Activated CD4-positive, alpha-beta T cell treated with anti-CD3 and anti-CD28 coated beads, Interleukin-2, amount 10 ng/mL, durations not matched to agents 24 days and 14 days (primary cell): ENCODE measurements at regions of chr3 and their contacts with region 1.

Region 1: DNA sequence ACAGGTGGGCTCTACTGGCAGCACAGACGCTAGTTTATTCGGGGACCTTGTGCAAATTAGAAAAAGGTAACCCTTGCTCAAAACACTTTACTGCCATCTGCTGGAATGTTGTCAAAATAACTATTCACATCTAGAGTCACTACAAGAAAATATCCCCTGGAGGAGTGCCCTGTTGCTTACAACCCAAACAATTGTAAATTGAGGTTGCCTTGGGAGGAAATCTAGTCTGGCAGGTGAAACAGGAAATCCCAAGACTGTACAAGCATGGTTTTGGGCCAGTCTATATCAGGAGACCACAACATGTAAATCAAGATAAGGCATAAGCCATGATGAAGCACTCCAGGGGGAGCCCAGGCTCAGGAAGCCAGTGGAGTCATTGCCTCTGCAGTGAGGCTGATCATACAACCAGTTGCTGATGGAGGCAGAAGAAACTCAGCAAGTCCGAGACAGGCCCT is 136.8 kb upstream of the ACP3 start:
- DNase-seq: peak; percentile 62
- H3K4me3 Mint-ChIP-seq: no peak overlapping the region
- H3K27ac Mint-ChIP-seq: no peak overlapping the region
- H3K4me1 Mint-ChIP-seq: no peaks in the 10 kb centered on the region
- H3K27me3 Mint-ChIP-seq: peaks cover 3% of the 10 kb centered on the region

Region 2: GRCh38 chr3:132006605-132007204 is 173.7 kb before region 1 on chr3:
- intact Hi-C with region 1: no loop called
- DNase-seq: peak; percentile 60
- H3K4me3 Mint-ChIP-seq: no peak overlapping the region
- H3K27ac Mint-ChIP-seq: no peak overlapping the region
- H3K4me1 Mint-ChIP-seq: no peaks in the 10 kb centered on the region
- H3K27me3 Mint-ChIP-seq: no peaks in the 10 kb centered on the region

Region 3: DNA sequence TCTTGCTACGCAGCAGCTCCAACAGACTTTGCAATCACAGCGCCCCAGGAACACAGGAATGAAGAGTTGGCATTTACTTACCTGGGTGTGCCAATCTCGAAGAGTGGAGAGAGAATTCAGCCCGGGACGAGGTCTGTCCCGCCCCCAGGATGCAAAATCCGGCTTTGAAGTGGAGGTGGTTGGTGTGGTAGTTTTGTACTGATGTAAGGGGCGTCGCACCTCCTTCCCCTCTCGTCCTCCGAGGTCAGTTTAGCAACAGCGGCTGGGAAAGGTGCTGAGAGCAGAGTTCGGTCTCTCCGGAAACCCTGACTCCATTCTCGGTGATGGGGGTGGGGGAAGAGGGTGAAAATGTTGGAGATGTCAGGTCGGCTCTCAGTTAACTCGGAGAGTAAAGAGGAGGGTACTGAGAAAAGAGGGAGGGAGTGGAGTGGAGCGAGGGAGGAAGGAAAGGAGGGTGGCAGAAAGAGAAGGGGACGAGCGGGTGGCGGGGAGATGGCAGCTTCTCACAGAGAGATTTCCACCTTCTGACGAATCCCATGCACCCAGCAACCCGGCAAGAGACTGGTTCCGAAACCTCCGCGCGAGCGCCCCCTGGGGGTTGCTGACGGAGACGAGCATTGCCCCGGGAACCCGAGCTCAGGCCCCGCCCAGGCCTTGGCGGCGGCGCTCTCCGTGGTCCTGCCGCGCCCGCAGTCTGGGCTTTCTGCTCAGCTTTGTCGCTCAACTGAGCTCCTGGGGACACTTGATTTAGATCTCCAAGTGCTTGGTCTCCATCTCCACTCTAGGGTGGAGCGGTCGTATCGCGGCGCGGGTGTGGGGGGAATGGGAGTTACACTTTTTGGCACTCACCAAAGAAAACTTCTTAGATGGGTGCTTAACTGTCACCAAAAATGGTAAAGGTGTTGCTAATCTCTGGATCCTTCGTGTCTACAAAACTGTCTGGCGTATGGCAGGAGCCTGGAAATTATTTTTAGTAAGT is 145.6 kb before region 1 on chr3 and contains the start of gene CPNE4:
- intact Hi-C with region 1: loop called (anchors 5 kb)
- DNase-seq: peak; percentile 92
- H3K4me3 Mint-ChIP-seq: peak within 1 kb of the TSS; percentile 7
- H3K27ac Mint-ChIP-seq: no peak within 1 kb of the TSS
- H3K4me1 Mint-ChIP-seq: peaks cover 4% of the 10 kb centered on the region
- H3K27me3 Mint-ChIP-seq: peaks cover 45% of the 10 kb centered on the region
- total RNA-seq, gene CPNE4: not detected in 2 replicates